ENCODE measurements at regions of chr6 and their contacts with region 1.

Region 1: DNA sequence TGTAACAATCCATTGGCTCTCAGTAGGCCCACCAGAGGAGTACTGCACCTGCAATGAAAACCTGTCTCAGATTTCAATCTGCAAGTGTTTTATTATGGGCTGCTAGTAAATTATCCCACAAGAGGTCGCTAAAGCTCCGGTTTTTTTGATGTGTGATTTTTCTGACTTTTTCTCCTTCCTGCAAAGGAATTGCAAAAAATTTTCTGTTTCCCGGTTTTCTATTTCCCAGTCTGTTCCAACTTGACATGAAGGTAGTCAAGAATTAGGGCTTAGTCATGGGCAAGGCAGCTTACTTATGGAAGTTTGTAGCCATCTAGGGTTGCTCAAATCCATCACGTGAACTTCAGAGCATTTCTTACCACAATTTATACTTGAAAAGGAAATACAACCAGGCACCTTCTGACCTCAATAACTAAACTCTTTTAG is 38.5 kb upstream of the AHI1 start:
- DNase-seq: no peak
- H3K4me3 ChIP-seq: no peak overlapping the region
- H3K27ac ChIP-seq: no peak overlapping the region
- H3K4me1 ChIP-seq: peaks cover 0 to 11% (median 6%) of the 10 kb centered on the region in 6 donors
- H3K27me3 ChIP-seq: no peaks in the 10 kb centered on the region
- CTCF ChIP-seq: peak in 10 of 11 experiments; percentile 17 to 71 (median 58)
- POLR2A ChIP-seq: no peak

Region 2: DNA sequence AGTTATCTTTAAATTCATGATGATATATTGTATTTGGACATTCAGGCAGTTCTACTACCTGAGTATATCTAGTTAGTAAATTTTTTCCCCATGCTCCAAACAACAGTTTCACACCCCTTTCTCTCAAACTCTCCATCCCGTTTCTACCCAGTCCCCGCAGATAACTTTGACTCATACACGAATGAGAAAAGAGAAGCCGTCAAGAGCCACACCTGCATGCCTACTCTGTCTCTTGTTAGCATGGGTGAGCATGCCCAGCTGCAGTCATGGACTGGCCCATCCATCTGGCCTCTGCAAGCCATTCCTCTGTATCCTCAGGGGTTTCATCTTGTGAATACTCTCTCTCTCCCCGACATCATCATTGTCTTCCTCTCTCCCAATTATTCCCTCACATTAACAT is 313.4 kb before region 1 on chr6:
- intact Hi-C with region 1: no loop called
- DNase-seq: no peak
- H3K4me3 ChIP-seq: no peak overlapping the region
- H3K27ac ChIP-seq: no peak overlapping the region
- H3K4me1 ChIP-seq: peaks cover 0 to 7% (median 0%) of the 10 kb centered on the region in 6 donors
- H3K27me3 ChIP-seq: no peaks in the 10 kb centered on the region
- CTCF ChIP-seq: no peak
- POLR2A ChIP-seq: no peak

Region 3: GRCh38 chr6:135310291-135310690 is 225.7 kb before region 1 on chr6:
- intact Hi-C with region 1: no loop called
- DNase-seq: no peak
- H3K4me3 ChIP-seq: no peak overlapping the region
- H3K27ac ChIP-seq: no peak overlapping the region
- H3K4me1 ChIP-seq: peaks cover 0 to 12% (median 0%) of the 10 kb centered on the region in 6 donors
- H3K27me3 ChIP-seq: no peaks in the 10 kb centered on the region
- CTCF ChIP-seq: no peak
- POLR2A ChIP-seq: no peak

Region 4: GRCh38 chr6:135909737-135910387 is 373.9 kb after region 1 on chr6:
- intact Hi-C with region 1: loop called (anchors 10 kb)
- DNase-seq: no peak
- H3K4me3 ChIP-seq: no peak overlapping the region
- H3K27ac ChIP-seq: no peak overlapping the region
- H3K4me1 ChIP-seq: peaks cover 0 to 4% (median 0%) of the 10 kb centered on the region in 6 donors
- H3K27me3 ChIP-seq: no peaks in the 10 kb centered on the region
- CTCF ChIP-seq: peak; percentile 20 to 74 (median 56)
- POLR2A ChIP-seq: no peak